ENCODE measurements at regions of chr19 and their contacts with region 1.

Region 1: DNA sequence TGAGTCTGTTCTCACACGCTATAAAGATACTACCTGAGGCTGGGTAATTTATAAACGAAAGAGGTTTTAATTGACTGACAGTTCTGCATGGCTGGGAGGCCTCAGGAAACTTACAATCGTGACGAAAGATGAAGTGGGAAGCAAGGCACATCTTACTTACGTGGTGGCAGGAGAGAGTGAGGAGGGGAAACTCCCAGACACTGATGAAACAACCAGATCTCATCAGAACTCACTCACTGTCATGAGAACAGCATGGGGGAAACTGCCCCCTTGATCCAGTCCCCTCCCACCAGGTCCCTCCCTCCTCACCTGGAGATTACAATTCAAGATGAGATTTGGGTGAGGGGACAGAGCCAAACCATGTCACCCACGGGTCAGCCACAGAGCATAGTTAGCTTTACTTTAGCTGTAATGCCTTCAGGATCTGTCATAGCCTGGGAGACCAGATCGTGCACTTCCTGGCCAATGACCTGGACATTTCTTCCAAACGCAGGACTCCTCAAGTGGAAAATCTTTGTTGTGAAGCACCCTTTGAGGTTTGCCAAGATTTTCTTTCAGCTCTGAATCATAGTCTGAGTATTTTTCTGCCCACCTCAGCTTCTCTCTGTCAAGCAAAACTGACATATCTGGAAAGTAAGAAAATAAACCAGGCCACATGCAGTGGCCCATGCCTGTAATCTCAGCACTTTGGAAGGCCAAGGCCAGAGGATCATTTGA is 25.2 kb upstream of the HIF3A start:
- DNase-seq: no peak
- ATAC-seq: no peak
- H3K4me3 ChIP-seq: no peak overlapping the region
- H3K4me3 Mint-ChIP-seq: no peak overlapping the region
- H3K27ac ChIP-seq: no peak overlapping the region
- H3K27ac Mint-ChIP-seq: no peak overlapping the region
- H3K4me1 ChIP-seq: no peaks in the 10 kb centered on the region
- H3K4me1 Mint-ChIP-seq: peaks cover 9% of the 10 kb centered on the region
- H3K27me3 ChIP-seq: peaks cover 6 to 12% of the 10 kb centered on the region in 2 experiments
- H3K27me3 Mint-ChIP-seq: peaks cover 44% of the 10 kb centered on the region
- CTCF ChIP-seq: no peak

Region 2: DNA sequence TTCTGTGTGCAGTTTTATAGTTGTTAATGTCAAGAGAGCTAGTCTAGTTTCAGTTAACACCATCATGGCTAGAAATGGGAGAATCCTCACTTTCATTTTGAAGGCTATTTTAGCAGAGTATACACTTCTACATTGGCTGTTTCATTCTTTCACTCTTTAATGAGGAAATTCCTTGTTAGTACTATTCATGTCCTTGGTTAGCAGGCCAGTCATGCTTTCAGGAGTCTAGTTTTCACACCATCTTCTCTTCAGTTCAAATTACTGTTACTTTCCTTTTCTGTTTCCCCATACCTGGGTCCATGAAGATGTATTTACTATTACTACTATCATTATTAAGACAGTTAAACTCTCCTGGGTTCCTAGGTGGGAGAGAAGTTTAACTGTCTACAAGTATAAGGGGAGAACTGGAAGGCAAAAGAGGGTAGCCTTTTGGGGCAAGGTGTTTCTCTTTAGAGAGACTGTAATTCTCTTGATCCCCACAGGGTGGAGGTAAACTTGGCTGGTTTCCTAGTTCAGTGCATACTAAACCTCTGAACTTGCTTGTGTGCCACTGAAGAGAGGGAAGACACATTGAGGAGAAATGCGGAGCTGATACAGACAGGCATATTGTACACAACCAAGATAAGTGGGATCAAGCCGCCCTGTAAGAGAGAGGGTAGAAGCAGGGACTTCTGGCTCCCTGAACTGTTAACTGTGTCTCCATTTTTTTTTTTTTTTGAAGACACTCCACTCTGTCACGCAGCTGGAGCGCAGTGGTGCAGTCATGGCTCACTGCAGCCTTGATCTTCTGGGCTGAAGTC is 189.5 kb before region 1 on chr19:
- CTCF ChIA-PET with region 1: no interaction called
- POLR2A ChIA-PET with region 1: no interaction called
- intact Hi-C with region 1: no loop called
- DNase-seq: peak in 2 of 9 experiments; percentile 27 to 47
- ATAC-seq: no peak
- H3K4me3 ChIP-seq: no peak overlapping the region
- H3K4me3 Mint-ChIP-seq: no peak overlapping the region
- H3K27ac ChIP-seq: no peak overlapping the region
- H3K27ac Mint-ChIP-seq: no peak overlapping the region
- H3K4me1 ChIP-seq: peaks cover 6% of the 10 kb centered on the region
- H3K4me1 Mint-ChIP-seq: peaks cover 3% of the 10 kb centered on the region
- H3K27me3 ChIP-seq: peaks cover 7 to 20% of the 10 kb centered on the region in 2 experiments
- H3K27me3 Mint-ChIP-seq: peaks cover 56% of the 10 kb centered on the region
- CTCF ChIP-seq: peak; percentile 50

Region 3: DNA sequence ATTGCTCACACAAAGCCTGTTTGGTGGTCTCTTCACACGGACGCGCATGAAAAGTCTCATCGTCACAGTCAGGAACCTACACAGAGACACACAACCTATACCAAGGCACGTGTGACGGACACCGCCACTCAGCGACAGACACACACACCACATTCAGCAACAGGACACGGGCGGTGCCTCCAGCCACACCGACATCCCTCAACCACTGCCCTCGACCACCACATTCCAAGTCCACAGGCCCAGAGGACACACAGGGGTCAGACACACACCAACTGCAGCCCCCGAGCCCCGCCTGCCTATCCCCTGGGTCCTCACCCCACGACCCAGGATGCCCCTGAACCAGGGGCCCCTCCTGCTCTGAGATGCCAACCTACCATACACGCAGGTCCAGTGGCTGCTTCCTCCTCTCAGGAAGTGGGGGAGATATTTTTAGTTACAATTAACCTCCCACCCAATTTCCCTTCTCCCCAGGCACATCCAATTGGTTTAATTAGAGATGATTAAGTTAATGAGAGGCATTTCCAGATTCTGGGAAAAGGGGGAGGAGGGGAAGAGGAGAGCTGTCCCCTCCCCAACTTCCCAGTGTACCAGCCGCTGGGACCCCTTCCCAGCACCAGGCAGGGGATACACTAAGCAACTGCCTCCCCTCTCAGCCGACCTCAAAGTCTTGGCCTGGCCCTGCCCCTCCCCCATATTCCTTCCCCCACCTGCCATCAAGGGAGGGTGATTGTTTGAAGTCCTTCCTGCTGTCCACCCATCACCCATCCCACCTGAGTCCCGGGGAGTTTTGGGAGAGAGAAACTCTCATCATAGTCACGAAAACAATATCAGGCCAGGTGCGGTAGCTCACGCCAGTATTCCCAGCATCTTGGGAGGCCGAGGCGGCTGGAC is 1127.3 kb after region 1 on chr19:
- CTCF ChIA-PET with region 1: no interaction called
- POLR2A ChIA-PET with region 1: no interaction called
- intact Hi-C with region 1: loop called in 1 of 2 experiments (anchors 5 kb)
- DNase-seq: no peak
- ATAC-seq: no peak
- H3K4me3 ChIP-seq: no peak overlapping the region
- H3K4me3 Mint-ChIP-seq: no peak overlapping the region
- H3K27ac ChIP-seq: no peak overlapping the region
- H3K27ac Mint-ChIP-seq: no peak overlapping the region
- H3K4me1 ChIP-seq: no peaks in the 10 kb centered on the region
- H3K4me1 Mint-ChIP-seq: no peaks in the 10 kb centered on the region
- H3K27me3 ChIP-seq: peaks cover 0 to 3% of the 10 kb centered on the region in 2 experiments
- H3K27me3 Mint-ChIP-seq: peaks cover 28% of the 10 kb centered on the region
- CTCF ChIP-seq: no peak

Measured in CD8-positive, alpha-beta T cell (primary cell).